IMR-90 (cell line): ENCODE measurements at regions of chr5 and their contacts with region 1.

Region 1: DNA sequence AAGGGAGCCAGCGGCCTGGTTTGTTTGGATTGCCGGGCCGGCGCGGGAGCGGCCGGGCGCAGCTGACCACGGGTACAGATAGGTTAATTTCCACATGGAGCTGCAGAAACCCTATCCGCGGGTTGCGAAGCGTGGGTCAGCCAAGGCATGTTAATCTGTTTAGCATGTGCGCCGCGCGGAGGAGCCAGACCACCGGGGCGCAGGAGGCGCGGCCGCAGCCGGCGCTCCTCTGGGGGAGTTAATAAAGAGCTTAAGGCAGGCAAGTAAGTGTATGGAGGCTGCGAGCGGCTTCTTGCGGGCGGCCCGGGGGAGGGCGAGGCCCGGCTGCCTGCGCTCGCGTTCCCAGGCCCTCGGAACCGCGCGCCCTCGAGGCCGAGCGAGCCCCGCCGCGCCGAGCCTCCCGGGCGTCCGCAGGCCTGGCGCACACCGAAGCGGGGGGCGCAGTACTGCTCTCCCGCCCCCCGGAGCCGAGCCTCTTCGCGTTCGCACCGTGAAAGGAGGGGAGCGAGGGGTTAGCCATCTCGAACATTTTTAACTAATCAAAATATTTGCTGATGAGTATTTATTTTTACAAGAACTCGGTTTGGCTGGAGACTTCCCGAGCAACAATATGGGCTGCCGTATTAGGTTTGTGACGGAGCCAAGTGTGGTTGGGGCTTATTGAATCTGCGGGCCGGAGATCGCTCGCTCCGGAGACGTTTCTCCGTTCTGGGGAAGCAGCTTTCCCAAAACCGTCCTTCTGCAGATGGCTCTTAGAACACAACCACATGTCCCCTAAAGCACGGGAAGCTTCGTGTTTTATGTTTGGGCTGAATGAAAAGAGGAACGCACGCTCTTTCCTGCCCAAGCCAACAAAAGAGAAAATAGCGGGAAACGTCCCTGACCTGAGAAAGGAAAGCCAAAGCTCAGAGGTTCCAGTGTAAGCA is 28.8 kb downstream of the FOXD1 start:
- DNase-seq: peak; percentile 86
- ATAC-seq: peak; percentile 68
- H3K4me3 ChIP-seq: peak overlapping the region; percentile 13
- H3K27ac ChIP-seq: peak overlapping the region; percentile 41
- H3K4me1 ChIP-seq: peaks cover 22% of the 10 kb centered on the region
- H3K27me3 ChIP-seq: no peaks in the 10 kb centered on the region
- CTCF ChIP-seq: no peak
- POLR2A ChIP-seq: no peak
- RAD21 ChIP-seq: no peak

Region 2: DNA sequence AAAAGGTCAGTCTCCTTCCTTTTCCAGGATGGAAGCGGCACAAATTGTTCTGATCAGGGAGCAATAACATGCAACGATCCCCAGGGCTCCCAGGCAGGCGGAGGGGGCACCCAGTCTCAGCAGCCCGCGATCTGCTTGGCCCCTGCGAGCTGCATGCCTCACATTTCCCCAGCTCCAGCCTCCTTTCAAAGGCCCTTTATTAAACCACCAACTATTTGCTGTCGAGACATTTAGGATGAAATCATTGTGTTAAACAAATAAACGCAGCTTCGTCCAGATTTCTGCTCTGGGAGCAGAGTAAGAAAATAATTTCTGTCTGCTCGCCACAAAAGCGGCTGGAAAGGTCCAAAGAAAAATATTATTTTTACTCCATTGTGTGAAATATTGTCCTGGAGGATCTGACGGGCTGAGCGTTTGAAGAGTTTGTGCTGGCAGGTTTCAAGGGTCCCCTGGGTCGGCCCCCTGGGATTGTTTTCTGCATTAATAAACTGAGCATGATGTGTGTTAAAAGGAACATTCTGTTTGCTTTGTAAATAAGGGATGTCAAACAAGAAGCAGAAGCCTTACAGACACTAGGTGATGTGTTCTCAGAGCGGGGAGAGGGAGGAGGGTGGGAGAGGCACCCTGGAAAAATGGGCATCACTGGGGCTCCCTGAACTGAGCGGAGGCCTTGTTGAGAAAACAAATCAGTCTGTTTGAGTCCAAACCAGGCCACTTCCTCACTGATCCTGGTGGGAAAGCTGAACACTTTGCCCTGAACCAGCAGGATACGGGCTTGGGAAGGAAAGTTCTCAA is 81.3 kb before region 1 on chr5:
- CTCF ChIA-PET with region 1: no interaction called
- POLR2A ChIA-PET with region 1: no interaction called
- dilution Hi-C with region 1: no loop called
- in situ Hi-C with region 1: no loop called
- intact Hi-C with region 1: no loop called
- DNase-seq: peak; percentile 89
- ATAC-seq: peak; percentile 96
- H3K4me3 ChIP-seq: no peak overlapping the region
- H3K27ac ChIP-seq: peak overlapping the region; percentile 3
- H3K4me1 ChIP-seq: peaks cover 14% of the 10 kb centered on the region
- H3K27me3 ChIP-seq: peaks cover 6% of the 10 kb centered on the region; the same call in 1 of the 2 replicates
- CTCF ChIP-seq: no peak
- POLR2A ChIP-seq: no peak
- RAD21 ChIP-seq: peak; percentile 30

Region 3: GRCh38 chr5:73433982-73434342 is 14.2 kb after region 1 on chr5:
- CTCF ChIA-PET with region 1: interaction called, 11 read pairs
- POLR2A ChIA-PET with region 1: no interaction called
- dilution Hi-C with region 1: no loop called
- in situ Hi-C with region 1: no loop called
- intact Hi-C with region 1: no loop called
- DNase-seq: peak; percentile 68
- ATAC-seq: 0 out of 2 replicates have a peak, but pooled peaks have one; percentile 25
- H3K4me3 ChIP-seq: no peak overlapping the region
- H3K27ac ChIP-seq: no peak overlapping the region
- H3K4me1 ChIP-seq: peaks cover 6% of the 10 kb centered on the region
- H3K27me3 ChIP-seq: no peaks in the 10 kb centered on the region
- CTCF ChIP-seq: no peak
- POLR2A ChIP-seq: no peak
- RAD21 ChIP-seq: no peak

Region 4: GRCh38 chr5:73851471-73852181 is 431.9 kb after region 1 on chr5:
- CTCF ChIA-PET with region 1: no interaction called
- POLR2A ChIA-PET with region 1: no interaction called
- dilution Hi-C with region 1: no loop called
- in situ Hi-C with region 1: no loop called
- intact Hi-C with region 1: no loop called
- DNase-seq: no peak
- ATAC-seq: no peak
- H3K4me3 ChIP-seq: no peak overlapping the region
- H3K27ac ChIP-seq: no peak overlapping the region
- H3K4me1 ChIP-seq: 0 out of 2 replicates have a peak, but pooled peaks cover 1% of the 10 kb centered on the region
- H3K27me3 ChIP-seq: no peaks in the 10 kb centered on the region
- CTCF ChIP-seq: no peak
- POLR2A ChIP-seq: no peak
- RAD21 ChIP-seq: no peak